ENCODE measurements at regions of chr2 and their contacts with region 1.

Region 1: DNA sequence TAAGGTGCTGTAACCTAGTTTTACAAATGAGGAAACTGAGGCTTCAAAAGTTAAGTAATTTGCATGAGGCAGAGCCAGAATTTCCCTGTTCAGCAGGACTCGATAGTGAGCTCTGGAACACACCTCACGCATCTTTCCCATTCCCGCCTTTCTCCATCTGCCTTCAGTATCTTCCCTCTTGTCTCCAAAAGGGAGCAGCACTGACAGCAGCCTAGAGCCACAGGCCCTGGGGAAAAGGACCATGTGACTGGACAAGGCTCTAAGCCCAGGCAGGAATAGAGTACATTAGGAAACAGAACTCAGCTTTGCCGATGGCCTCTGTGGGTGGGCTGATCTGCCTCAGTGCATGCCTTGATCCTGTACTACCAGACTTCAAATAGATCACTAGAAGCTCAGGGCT is 21.5 kb downstream of the GPR155 start:
- DNase-seq: no peak
- H3K4me3 ChIP-seq: no peak overlapping the region
- H3K4me3 Mint-ChIP-seq: no peak overlapping the region
- H3K27ac ChIP-seq: no peak overlapping the region
- H3K27ac Mint-ChIP-seq: no peak overlapping the region
- H3K4me1 ChIP-seq: no peaks in the 10 kb centered on the region
- H3K4me1 Mint-ChIP-seq: peaks cover 0 to 1% (median 0%) of the 10 kb centered on the region in 3 donors
- H3K27me3 ChIP-seq: no peaks in the 10 kb centered on the region
- H3K27me3 Mint-ChIP-seq: no peaks in the 10 kb centered on the region

Region 2: DNA sequence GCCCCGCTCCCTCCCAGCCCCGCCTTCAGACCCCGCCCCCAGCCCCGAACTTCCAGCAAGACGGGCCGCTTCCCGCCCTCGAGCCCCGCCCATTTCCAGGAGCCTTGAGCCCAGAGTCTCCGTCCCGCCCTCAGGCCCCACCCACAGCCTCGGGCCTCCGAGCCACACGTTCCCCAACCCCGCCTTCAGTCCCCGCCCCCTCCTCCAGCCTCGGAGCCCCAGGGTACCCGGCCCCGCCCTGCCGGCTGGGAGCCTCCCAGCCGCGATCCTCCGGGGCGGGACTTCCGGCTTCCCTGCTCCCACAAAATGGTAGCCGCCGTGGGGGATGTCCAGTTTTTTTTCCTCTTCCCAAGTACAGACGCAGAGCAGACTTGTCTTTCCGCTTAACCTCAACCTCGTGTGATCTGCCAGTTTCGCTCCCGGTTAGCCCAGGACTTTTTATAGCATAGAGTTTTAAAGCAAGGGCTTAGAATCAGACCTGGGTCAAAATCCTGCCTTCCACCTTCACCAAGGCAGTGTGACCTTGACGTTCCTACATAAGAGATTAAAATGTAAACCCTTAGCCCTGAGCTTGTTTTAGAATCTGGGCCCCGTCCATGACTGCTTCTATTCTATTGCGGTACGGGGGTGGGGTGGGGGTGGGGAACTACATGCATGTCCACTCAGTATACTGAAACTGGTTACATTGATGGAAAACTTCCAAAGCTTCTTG is 21.9 kb after region 1 on chr2:
- CTCF ChIA-PET with region 1: interaction called, 34 read pairs
- POLR2A ChIA-PET with region 1: interaction called, 4 read pairs
- DNase-seq: peak; percentile 76 to 96 (median 95)
- H3K4me3 ChIP-seq: peak overlapping the region; percentile 91
- H3K4me3 Mint-ChIP-seq: peak overlapping the region; percentile 93 to 100 (median 99)
- H3K27ac ChIP-seq: peak overlapping the region; percentile 49
- H3K27ac Mint-ChIP-seq: peak overlapping the region; percentile 82 to 99 (median 96)
- H3K4me1 ChIP-seq: peaks cover 69% of the 10 kb centered on the region
- H3K4me1 Mint-ChIP-seq: peaks cover 69 to 87% (median 83%) of the 10 kb centered on the region in 3 donors
- H3K27me3 ChIP-seq: no peaks in the 10 kb centered on the region
- H3K27me3 Mint-ChIP-seq: no peaks in the 10 kb centered on the region

Region 3: DNA sequence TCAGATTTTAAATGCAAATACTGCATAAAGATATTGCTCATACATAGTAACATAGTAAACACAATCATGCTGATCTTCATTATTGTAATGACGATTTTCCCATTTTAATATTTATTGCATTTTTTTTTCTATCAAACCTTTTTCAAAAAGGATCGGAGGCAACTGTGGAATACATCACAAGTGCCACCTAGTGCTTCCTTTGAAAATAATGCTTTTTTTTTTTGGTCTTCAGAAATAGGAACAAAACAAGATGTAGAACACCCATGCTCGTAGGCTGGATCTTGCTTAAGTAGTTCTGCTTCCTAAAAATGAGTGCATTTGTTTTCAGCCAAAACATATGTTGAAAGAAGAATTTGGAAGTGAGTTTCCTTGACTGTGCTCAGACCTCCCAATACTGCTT is 57.2 kb after region 1 on chr2:
- CTCF ChIA-PET with region 1: interaction called, 77 read pairs
- POLR2A ChIA-PET with region 1: interaction called, 4 read pairs
- DNase-seq: no peak
- H3K4me3 ChIP-seq: no peak overlapping the region
- H3K4me3 Mint-ChIP-seq: no peak overlapping the region
- H3K27ac ChIP-seq: no peak overlapping the region
- H3K27ac Mint-ChIP-seq: no peak overlapping the region
- H3K4me1 ChIP-seq: no peaks in the 10 kb centered on the region
- H3K4me1 Mint-ChIP-seq: peaks cover 0 to 13% (median 8%) of the 10 kb centered on the region in 3 donors
- H3K27me3 ChIP-seq: no peaks in the 10 kb centered on the region
- H3K27me3 Mint-ChIP-seq: peaks cover 0 to 1% of the 10 kb centered on the region in 2 donors

Region 4: GRCh38 chr2:174553811-174554493 is 88.6 kb after region 1 on chr2:
- CTCF ChIA-PET with region 1: interaction called, 20 read pairs
- POLR2A ChIA-PET with region 1: interaction called, 4 read pairs
- DNase-seq: peak in 4 of 5 donors; percentile 18 to 58 (median 29)
- H3K4me3 ChIP-seq: no peak overlapping the region
- H3K4me3 Mint-ChIP-seq: peak overlapping the region; percentile 1 to 78 (median 75)
- H3K27ac ChIP-seq: peak overlapping the region; percentile 16
- H3K27ac Mint-ChIP-seq: peak overlapping the region; percentile 5 to 97 (median 90)
- H3K4me1 ChIP-seq: peaks cover 28% of the 10 kb centered on the region
- H3K4me1 Mint-ChIP-seq: peaks cover 45 to 62% (median 60%) of the 10 kb centered on the region in 3 donors
- H3K27me3 ChIP-seq: no peaks in the 10 kb centered on the region
- H3K27me3 Mint-ChIP-seq: no peaks in the 10 kb centered on the region

Region 5: DNA sequence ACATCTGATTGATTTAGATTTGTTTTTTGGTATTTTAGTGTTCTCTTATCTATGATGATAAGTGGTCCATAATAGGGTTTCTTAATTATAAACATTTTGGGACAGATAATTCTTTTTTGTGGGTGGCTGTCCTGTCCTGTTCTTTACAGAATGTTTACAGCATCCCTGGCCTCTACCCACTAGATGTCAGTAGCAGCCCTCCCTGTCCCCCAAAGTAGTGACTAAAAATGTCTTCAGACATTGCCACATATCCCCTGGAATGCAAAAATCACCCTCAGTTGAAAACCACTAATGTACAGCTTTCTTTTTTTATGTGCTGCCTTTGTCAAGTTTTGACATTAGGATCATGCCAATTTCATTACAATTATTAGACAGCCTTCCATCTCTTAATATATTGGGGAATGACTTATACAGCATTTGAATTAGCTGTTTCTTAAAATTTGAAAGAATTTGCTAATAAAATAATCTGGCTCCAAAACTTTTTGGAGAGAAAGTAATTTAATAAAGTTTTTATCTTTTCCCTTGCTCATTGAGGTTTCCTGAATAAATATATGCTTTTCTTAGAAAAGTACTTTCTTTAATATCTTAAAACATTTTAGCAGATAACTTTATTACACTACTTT is 112.8 kb after region 1 on chr2:
- CTCF ChIA-PET with region 1: interaction called, 13 read pairs
- POLR2A ChIA-PET with region 1: no interaction called
- DNase-seq: peak; percentile 34 to 73 (median 64)
- H3K4me3 ChIP-seq: no peak overlapping the region
- H3K4me3 Mint-ChIP-seq: peak overlapping the region in 1 of 7 donors; percentile 15
- H3K27ac ChIP-seq: no peak overlapping the region
- H3K27ac Mint-ChIP-seq: peak overlapping the region; percentile 43 to 89 (median 77)
- H3K4me1 ChIP-seq: peaks cover 65% of the 10 kb centered on the region
- H3K4me1 Mint-ChIP-seq: peaks cover 80 to 96% (median 93%) of the 10 kb centered on the region in 3 donors
- H3K27me3 ChIP-seq: no peaks in the 10 kb centered on the region
- H3K27me3 Mint-ChIP-seq: no peaks in the 10 kb centered on the region